Activated CD8-positive, alpha-beta memory T cell treated with anti-CD3 and anti-CD28 coated beads, Interleukin-2, amount 10 ng/mL, durations not matched to agents 7 days and 5 days (primary cell): ENCODE measurements at regions of chr2 and their contacts with region 1.

Region 1: DNA sequence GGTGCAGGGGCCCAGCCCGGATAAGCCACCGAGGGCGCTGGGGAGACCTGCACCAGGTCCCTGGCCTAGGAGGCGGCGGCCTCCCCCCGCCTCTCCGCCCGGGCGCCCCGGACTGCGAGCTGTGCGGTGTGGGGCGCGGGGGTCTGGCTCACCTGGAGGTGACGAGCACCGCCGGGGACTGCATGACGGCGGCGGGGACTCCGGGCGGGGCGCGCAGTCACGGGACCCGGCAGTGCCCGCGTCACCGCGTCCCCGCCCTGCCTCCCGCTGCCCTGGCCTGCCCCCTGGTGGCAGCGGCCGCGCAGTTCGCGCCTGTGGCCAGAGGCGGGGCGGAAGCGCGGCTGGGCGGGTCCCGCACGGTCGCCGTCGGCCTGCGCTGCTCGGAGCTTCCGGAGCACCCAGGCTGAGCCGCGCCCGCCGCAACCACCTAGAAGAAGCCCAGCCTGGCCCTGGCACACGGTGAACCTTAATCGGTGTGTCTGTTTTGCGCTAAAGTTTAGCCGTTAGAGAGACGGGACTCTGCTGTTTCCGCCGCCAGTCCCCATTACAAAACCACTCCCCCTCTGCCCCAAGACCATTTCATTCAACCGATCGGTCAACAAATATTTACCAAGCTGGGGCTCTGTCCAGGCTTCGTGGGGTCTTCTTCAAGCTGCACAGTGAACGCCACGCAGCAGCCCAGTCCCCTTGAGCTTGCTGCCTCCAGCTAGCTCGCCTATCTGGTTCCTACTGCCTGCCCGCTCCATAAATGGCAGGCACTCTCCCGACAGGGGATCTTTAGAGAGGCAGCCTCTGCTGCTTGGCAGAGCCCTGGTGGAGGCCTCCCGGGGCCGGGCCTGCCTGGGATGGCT is at the start of gene HS1BP3:
- DNase-seq: peak; percentile 88
- ATAC-seq: peak; percentile 96
- H3K4me3 Mint-ChIP-seq: peak within 1 kb of the TSS; percentile 83
- H3K27ac Mint-ChIP-seq: peak within 1 kb of the TSS; percentile 87
- H3K4me1 Mint-ChIP-seq: peaks cover 19% of the 10 kb centered on the region
- H3K27me3 Mint-ChIP-seq: peaks cover 12% of the 10 kb centered on the region
- total RNA-seq, gene HS1BP3: 12.8 to 12.9 TPM

Region 2: GRCh38 chr2:20424300-20425290 is 226.5 kb before region 1 on chr2:
- CTCF ChIA-PET with region 1: interaction called, 11 read pairs
- DNase-seq: peak; percentile 77
- ATAC-seq: peak; percentile 71
- H3K4me3 Mint-ChIP-seq: no peak overlapping the region
- H3K27ac Mint-ChIP-seq: peak overlapping the region; percentile 82
- H3K4me1 Mint-ChIP-seq: peaks cover 29% of the 10 kb centered on the region
- H3K27me3 Mint-ChIP-seq: peaks cover 6% of the 10 kb centered on the region

Region 3: DNA sequence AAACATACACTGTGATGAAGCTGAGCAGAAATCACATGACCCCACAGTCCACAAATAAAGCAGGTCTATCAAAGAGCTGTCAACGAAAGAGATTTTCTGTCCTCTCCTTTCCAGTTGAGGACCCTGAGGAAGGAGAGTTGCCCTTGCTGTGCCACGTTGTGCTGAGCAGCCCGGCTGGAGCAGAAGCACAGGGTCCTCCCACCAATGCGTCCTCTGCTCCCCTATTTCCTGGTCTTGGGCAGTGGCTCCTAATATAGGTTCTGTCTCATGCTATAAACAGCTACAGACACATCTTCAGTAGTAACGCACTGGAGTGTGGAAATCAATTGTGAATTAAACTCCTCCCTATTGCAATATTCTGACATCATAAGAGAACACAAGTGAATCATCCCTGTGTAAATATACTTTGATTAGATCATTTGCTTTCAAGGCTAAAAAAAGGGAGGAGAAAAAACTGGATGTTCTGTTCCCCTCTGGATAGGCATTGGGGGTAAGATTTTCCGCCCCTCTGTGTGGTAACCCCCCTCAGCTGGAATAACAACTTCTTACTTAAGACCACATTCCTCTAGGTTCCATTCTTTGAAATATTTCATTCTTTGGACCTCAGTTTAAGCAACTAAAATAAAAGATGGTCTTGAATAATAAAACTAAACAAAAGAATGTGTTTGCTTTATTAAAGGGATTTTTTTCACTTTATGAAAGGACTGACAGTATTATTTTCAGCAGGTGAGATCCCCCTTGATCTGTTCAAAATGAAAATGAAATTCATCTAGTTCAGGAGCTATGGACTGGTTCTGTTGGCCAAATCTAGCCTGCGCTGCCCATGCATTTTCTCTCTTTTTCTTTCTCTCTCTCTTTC is 212.5 kb before region 1 on chr2:
- CTCF ChIA-PET with region 1: interaction called, 46 read pairs
- DNase-seq: peak; percentile 31
- ATAC-seq: no peak
- H3K4me3 Mint-ChIP-seq: no peak overlapping the region
- H3K27ac Mint-ChIP-seq: no peak overlapping the region
- H3K4me1 Mint-ChIP-seq: peaks cover 4% of the 10 kb centered on the region
- H3K27me3 Mint-ChIP-seq: peaks cover 53% of the 10 kb centered on the region

Region 4: DNA sequence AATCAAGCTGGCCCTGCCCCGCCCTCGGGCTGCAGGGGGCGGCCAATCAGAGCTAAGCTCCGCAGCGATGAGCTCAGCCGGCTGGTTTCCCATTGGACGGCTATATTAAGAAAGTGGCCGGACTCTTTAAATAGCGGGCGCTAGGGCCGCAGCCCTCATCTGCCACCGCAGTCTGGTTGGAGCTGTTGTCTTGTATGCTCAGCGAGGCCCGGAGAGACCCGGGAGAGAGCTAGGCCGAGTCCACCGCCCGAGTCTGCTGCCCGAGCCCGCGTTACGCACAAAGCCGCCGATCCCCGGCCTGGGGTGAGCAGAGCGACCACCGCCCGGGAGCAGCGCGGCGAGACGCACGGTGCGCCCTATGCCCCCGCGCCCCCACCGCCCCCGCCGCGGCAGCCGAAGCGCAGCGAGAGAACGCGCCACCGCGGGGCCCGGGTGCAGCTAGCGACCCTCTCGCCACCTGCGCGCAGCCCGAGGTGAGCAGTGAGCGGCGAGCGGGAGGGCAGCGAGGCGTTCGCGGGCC is 204.1 kb before region 1 on chr2 and contains the start of gene RHOB:
- CTCF ChIA-PET with region 1: interaction called, 46 read pairs
- DNase-seq: peak; percentile 94
- ATAC-seq: peak; percentile 97
- H3K4me3 Mint-ChIP-seq: peak within 1 kb of the TSS; percentile 73
- H3K27ac Mint-ChIP-seq: peak within 1 kb of the TSS; percentile 46
- H3K4me1 Mint-ChIP-seq: peaks cover 6% of the 10 kb centered on the region
- H3K27me3 Mint-ChIP-seq: peaks cover 50% of the 10 kb centered on the region
- total RNA-seq, gene RHOB: 9.1 to 36.4 TPM

Region 5: GRCh38 chr2:20525041-20526035 is 125.8 kb before region 1 on chr2:
- CTCF ChIA-PET with region 1: no interaction called
- DNase-seq: no peak
- ATAC-seq: peak; percentile 45
- H3K4me3 Mint-ChIP-seq: no peak overlapping the region
- H3K27ac Mint-ChIP-seq: peak overlapping the region; percentile 12
- H3K4me1 Mint-ChIP-seq: peaks cover 2% of the 10 kb centered on the region
- H3K27me3 Mint-ChIP-seq: peaks cover 8% of the 10 kb centered on the region

Region 6: DNA sequence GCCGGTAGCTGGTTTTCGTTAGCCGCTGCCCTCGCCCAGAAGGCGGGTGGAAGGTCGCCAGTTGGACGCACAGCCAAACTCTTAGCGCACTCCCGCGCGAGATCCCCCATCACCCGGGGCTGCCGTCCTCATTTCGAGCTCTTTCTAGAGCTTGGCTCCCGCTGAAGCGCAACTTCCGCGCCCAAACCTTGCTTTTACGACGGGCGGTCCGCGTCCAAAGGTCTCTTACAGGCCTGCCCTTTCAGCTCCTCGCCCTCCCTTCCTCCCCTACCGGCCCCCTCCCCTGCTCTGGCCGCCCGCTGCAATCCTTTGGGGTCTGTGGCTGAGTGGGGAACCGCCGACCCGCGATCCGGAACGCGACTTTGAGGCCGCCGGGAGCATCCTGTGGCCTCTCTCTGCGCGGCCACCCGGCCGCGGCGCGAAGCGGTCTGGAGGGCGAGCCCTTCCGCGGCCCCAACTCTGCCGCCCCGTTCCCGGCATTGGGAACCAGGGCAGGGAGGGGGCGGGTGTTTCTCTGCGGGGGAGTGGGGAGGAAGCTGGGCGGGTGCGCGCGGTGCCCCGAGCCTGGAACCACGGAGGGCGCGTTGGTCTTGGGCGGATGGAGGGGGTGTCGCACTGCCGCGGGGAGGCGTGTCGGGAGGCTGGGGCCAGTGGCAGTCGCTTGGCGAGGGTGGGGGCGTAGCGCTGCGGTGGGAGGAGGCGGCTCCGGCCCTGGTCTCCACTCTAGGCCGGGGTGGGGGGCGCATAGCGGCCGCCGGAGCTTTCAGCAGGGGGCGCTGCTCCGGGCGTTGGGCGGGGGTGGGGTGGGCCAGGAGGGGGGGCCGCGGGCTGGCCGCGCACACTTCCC is 15.4 kb after region 1 on chr2 and contains the start of gene GDF7:
- CTCF ChIA-PET with region 1: interaction called, 44 read pairs
- DNase-seq: no peak
- ATAC-seq: no peak
- H3K4me3 Mint-ChIP-seq: peak within 1 kb of the TSS; percentile 61
- H3K27ac Mint-ChIP-seq: no peak within 1 kb of the TSS
- H3K4me1 Mint-ChIP-seq: peaks cover 17% of the 10 kb centered on the region
- H3K27me3 Mint-ChIP-seq: peaks cover 89% of the 10 kb centered on the region
- total RNA-seq, gene GDF7: not detected